ENCODE measurements at regions of chr7 and their contacts with region 1.

Region 1: DNA sequence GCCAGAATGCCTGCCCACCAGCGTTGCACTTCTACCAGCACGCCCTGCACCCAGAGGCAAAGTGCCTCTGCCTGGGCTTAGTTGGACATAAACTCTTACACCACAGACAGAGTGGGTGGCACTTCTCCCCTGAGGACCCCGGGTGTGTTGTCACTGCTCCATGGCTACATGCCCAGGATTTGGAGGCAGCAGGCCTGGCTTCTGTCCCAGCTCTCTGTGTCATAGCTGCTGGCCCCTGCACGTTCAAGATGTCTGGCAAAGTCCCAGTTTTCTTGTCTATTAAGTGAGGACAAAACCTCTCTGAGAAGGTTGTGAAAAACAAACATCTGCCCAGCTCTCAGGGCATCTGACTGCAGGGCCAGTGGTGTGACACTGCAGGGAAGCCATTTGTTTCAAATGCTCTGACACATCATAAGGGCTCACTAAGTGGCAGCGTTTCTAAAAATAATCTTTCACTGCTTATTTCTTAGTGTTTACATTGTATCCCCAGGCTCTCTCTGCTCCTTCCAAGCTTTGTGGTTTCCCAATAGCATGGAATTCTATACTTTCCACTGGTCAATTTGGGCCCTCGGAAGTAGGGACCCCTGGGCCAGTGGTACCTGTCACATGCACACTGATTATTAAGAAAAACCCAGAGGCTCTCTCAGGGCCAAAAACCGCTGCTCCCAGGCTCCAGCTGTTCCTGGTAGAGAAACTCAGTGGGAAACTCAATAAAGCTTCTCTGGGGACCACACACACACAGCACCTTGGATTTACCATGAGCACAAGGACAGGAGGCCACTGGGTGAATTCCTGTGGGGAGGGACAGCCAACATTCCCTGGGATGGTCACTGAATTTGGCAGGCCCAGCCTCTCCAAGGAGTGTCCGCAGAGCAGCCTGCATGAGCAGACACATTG is 86.2 kb upstream of the ANLN start:
- DNase-seq: peak; percentile 54
- H3K4me3 ChIP-seq: no peak overlapping the region
- H3K27ac ChIP-seq: peak overlapping the region; percentile 41 to 64 (median 49)
- H3K4me1 ChIP-seq: peaks cover 5 to 21% (median 12%) of the 10 kb centered on the region in 4 donors
- H3K27me3 ChIP-seq: no peaks in the 10 kb centered on the region
- CTCF ChIP-seq: no peak
- EP300 ChIP-seq: no peak
- POLR2A ChIP-seq: no peak

Region 2: DNA sequence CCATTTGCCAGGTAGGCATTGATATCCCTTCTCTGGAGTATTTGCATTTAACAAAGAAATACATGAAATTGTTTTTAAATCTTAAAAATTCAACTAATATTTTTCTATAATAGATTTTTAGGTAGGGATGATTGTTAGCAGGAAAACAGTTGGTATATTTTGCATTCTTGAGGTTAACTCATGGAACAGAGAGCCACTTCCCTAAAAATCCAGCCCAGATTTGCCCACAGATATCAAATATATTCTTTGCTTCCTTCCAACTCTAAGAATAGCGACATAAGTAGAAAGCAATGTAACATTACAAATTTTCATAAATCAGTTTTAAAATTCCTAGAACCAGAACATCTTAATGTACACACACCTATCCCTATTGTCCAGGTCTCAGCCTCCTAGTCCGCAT is 41.2 kb after region 1 on chr7:
- in situ Hi-C with region 1: no loop called
- intact Hi-C with region 1: loop called (anchors 1 kb)
- DNase-seq: no peak
- H3K4me3 ChIP-seq: no peak overlapping the region
- H3K27ac ChIP-seq: no peak overlapping the region
- H3K4me1 ChIP-seq: no peaks in the 10 kb centered on the region
- H3K27me3 ChIP-seq: no peaks in the 10 kb centered on the region
- CTCF ChIP-seq: no peak
- EP300 ChIP-seq: no peak
- POLR2A ChIP-seq: no peak

Region 3: DNA sequence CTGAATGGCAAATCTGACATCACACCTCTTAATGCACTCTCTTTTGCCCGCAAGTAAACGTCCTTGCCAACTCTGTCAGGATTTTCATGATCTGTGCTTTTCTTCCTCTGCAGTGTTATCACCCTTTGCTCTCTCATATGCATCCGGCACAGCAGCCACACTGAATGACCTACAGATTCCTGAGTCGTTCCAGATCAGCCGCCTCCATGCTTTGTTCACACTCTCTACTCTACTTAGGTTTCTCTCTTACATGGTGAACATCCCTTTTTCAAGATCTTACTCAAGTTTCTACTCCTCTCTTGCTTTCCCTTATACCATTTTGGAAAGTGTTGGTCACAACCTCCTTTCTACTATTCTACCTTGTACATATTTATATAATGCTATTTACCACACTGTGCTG is 548.6 kb after region 1 on chr7:
- in situ Hi-C with region 1: no loop called
- intact Hi-C with region 1: no loop called
- DNase-seq: no peak
- H3K4me3 ChIP-seq: no peak overlapping the region
- H3K27ac ChIP-seq: no peak overlapping the region
- H3K4me1 ChIP-seq: no peaks in the 10 kb centered on the region
- H3K27me3 ChIP-seq: no peaks in the 10 kb centered on the region
- CTCF ChIP-seq: no peak
- EP300 ChIP-seq: no peak
- POLR2A ChIP-seq: no peak